Heart right ventricle (tissue), 16 donors: ENCODE measurements at regions of chr3 and their contacts with region 1.

Region 1: DNA sequence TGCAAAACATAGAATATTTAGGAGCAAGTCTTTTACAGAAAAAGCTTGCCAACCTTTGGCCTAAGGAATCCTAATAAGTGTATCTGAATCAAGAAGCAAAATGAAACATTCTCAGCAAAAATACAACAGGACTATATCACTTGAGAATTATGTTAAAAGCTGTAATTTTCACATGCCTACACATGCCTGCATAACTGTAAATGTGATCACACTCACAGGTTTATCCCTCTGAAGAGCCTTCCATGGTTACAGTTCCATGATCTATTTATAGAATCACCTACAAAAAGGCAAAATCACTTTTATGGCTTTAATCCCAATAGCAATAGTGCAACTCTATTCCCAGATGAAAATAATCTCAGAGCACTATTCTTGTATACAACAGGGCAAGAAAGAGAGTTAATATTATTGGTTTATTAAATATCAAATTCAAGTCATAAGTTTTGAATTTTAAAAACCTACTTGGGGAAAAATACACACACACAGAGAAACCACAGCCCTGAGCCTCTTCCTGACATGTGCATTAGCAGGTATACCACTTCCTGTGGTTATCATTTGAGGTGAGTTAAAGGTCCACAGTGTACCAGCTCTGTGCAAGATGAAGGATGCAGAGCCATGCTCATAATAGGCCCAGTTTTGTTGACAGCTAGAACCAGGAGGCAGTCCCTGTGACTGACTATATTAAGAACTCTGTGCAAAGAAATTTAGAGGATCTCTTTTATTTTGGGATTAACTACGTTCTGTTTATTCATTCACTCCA is 252.5 kb upstream of the TGFBR2 start:
- DNase-seq: no peak
- ATAC-seq: peak; percentile 40 to 88 (median 76)
- H3K4me3 ChIP-seq: no peak overlapping the region
- H3K27ac ChIP-seq: peak overlapping the region in 9 of 10 donors; percentile 59 to 82 (median 75)
- H3K4me1 ChIP-seq: peaks cover 5 to 63% (median 55%) of the 10 kb centered on the region in 9 donors
- H3K27me3 ChIP-seq: no peaks in the 10 kb centered on the region
- CTCF ChIP-seq: no peak

Region 2: GRCh38 chr3:30294241-30294667 is 59.6 kb before region 1 on chr3:
- intact Hi-C with region 1: no loop called
- DNase-seq: no peak
- ATAC-seq: peak in 7 of 8 donors; percentile 41 to 72 (median 58)
- H3K4me3 ChIP-seq: no peak overlapping the region
- H3K27ac ChIP-seq: peak overlapping the region in 5 of 10 donors; percentile 1 to 51 (median 15)
- H3K4me1 ChIP-seq: peaks cover 0 to 38% (median 9%) of the 10 kb centered on the region in 9 donors
- H3K27me3 ChIP-seq: no peaks in the 10 kb centered on the region
- CTCF ChIP-seq: no peak

Region 3: GRCh38 chr3:30511524-30512278 is 157.8 kb after region 1 on chr3:
- intact Hi-C with region 1: loop called in 2 of 10 experiments (anchors 5 to 10 kb)
- DNase-seq: no peak
- ATAC-seq: peak; percentile 64 to 96 (median 83)
- H3K4me3 ChIP-seq: no peak overlapping the region
- H3K27ac ChIP-seq: peak overlapping the region in 8 of 10 donors; percentile 11 to 51 (median 30)
- H3K4me1 ChIP-seq: peaks cover 0 to 20% (median 0%) of the 10 kb centered on the region in 9 donors
- H3K27me3 ChIP-seq: no peaks in the 10 kb centered on the region
- CTCF ChIP-seq: no peak

Region 4: DNA sequence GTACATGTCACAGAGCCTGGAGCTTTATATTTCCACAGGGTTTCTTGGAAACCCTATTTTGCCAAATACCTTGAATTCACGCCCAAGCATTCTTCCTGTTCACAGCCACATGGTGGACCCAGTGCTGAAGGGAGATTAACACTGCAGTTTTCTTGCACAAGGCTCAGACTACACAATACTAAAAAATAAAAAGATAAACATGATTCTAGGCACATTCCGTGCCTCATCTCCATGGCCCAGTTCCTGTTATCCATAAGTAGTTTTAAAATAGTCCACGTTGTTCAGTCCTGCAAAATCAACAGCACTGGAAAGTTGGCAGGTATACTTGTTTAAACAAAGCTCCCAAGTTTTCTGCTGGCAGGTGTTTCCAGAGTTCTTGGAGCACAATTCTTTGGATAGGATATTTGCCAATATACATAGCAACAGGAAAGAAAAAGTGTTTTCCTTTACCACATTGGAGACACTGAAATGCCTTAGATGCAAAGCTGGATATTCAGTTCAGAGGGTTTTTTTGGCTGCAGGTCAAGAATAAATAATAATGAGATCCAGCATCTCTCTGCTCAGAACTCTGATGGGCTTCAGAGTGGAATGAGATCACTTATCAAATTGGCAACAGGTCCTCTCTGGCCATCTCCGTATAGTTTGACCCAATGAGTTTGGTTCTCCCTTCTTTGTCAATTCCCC is 164.4 kb after region 1 on chr3:
- intact Hi-C with region 1: loop called in 2 of 10 experiments (anchors 5 to 10 kb)
- DNase-seq: peak in 1 of 2 donors; percentile 56
- ATAC-seq: peak; percentile 72 to 96 (median 90)
- H3K4me3 ChIP-seq: no peak overlapping the region
- H3K27ac ChIP-seq: peak overlapping the region; percentile 19 to 81 (median 68)
- H3K4me1 ChIP-seq: peaks cover 0 to 54% (median 37%) of the 10 kb centered on the region in 9 donors
- H3K27me3 ChIP-seq: no peaks in the 10 kb centered on the region
- CTCF ChIP-seq: peak in 6 of 9 donors; percentile 9 to 48 (median 21)

Region 5: GRCh38 chr3:30672959-30673358 is 319.1 kb after region 1 on chr3:
- intact Hi-C with region 1: no loop called
- DNase-seq: no peak
- ATAC-seq: peak in 6 of 8 donors; percentile 31 to 84 (median 42)
- H3K4me3 ChIP-seq: no peak overlapping the region
- H3K27ac ChIP-seq: peak overlapping the region in 4 of 10 donors; percentile 4 to 59 (median 20)
- H3K4me1 ChIP-seq: peaks cover 8 to 75% (median 52%) of the 10 kb centered on the region in 9 donors
- H3K27me3 ChIP-seq: no peaks in the 10 kb centered on the region
- CTCF ChIP-seq: no peak